A549 (cell line): ENCODE measurements at regions of chr19 and their contacts with region 1.

Region 1: DNA sequence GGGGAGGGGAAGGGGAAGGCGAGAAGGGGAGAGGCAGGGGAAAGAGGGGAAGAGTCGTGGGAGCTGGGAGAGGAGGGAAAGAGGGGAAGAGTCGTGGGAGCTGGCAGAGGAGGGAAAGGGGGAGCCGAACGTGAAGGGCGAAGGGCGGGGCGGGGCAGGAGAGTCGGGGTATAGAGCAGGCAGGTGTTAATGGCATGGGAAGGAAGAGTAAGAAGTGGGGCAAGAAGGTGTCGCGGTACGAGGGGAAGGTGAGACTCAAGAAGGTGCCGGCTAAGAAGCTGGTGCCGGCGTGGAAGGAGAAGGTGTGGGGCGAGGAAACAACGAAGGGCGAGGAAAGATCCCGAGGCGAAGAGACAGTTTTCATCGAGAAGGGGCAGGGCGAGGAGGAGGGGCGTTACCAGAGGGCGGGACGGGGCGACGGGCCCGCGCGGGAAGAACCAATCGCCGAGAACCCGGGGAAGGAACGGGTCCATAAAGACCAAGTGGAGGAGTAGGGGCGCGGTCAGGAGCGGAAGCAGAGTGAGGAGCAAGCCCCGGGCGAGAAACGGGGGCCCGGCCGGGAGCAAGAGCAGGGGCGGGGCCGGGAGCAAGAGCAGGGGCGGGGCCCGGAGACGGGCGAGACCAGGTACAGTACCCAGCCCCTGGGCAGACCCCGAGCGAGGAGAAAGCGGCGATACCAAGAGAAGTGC is 463 bp downstream of the CATSPERG start:
- DNase-seq: peak; percentile 99 to 100
- ATAC-seq: peak; percentile 82 to 92
- H3K4me3 ChIP-seq: peak overlapping the region; percentile 66
- H3K27ac ChIP-seq: peak overlapping the region; percentile 74 to 82
- H3K4me1 ChIP-seq: peaks cover 8% of the 10 kb centered on the region; the same call in 2 of the 3 replicates
- CTCF ChIP-seq: no peak
- EP300 ChIP-seq: no peak
- POLR2A ChIP-seq: no peak
- RAD21 ChIP-seq: no peak

Region 2: GRCh38 chr19:38229585-38230073 is 106.5 kb before region 1 on chr19:
- CTCF ChIA-PET with region 1: interaction called, 1,052 read pairs
- POLR2A ChIA-PET with region 1: interaction called, 4 read pairs
- DNase-seq: peak; percentile 89 to 93
- ATAC-seq: peak; percentile 49 to 79
- H3K4me3 ChIP-seq: peak overlapping the region; percentile 52
- H3K27ac ChIP-seq: peak overlapping the region in 1 of 2 experiments; percentile 67; a peak in 3 of 6 replicates
- H3K4me1 ChIP-seq: peaks cover 25% of the 10 kb centered on the region
- CTCF ChIP-seq: no peak
- EP300 ChIP-seq: no peak
- POLR2A ChIP-seq: no peak
- RAD21 ChIP-seq: no peak

Region 3: GRCh38 chr19:38277969-38278680 is 58.0 kb before region 1 on chr19:
- CTCF ChIA-PET with region 1: interaction called, 24 read pairs
- POLR2A ChIA-PET with region 1: no interaction called
- DNase-seq: no peak
- ATAC-seq: no peak; a peak in 1 of 6 replicates
- H3K4me3 ChIP-seq: no peak overlapping the region
- H3K27ac ChIP-seq: peak overlapping the region in 1 of 2 experiments; percentile 25; a peak in 2 of 6 replicates
- H3K4me1 ChIP-seq: peaks cover 34% of the 10 kb centered on the region
- CTCF ChIP-seq: no peak
- EP300 ChIP-seq: no peak
- POLR2A ChIP-seq: no peak
- RAD21 ChIP-seq: no peak

Region 4: GRCh38 chr19:38304866-38305429 is 31.1 kb before region 1 on chr19:
- CTCF ChIA-PET with region 1: interaction called, 76 read pairs
- POLR2A ChIA-PET with region 1: interaction called, 12 read pairs
- DNase-seq: peak; percentile 100
- ATAC-seq: peak; percentile 60 to 85
- H3K4me3 ChIP-seq: peak overlapping the region; percentile 60
- H3K27ac ChIP-seq: peak overlapping the region; percentile 92 to 95
- H3K4me1 ChIP-seq: peaks cover 50% of the 10 kb centered on the region
- CTCF ChIP-seq: no peak
- EP300 ChIP-seq: no peak; a peak in 1 of 5 replicates
- POLR2A ChIP-seq: peak; percentile 82
- RAD21 ChIP-seq: peak; percentile 1 to 43; a peak in 2 of 5 replicates

Region 5: GRCh38 chr19:38346837-38347236 is 10.7 kb after region 1 on chr19:
- CTCF ChIA-PET with region 1: interaction called, 16 read pairs
- POLR2A ChIA-PET with region 1: no interaction called
- DNase-seq: no peak
- ATAC-seq: no peak
- H3K4me3 ChIP-seq: no peak overlapping the region
- H3K27ac ChIP-seq: no peak overlapping the region
- H3K4me1 ChIP-seq: no peaks in the 10 kb centered on the region
- CTCF ChIP-seq: no peak
- EP300 ChIP-seq: no peak
- POLR2A ChIP-seq: no peak
- RAD21 ChIP-seq: no peak

Region 6: DNA sequence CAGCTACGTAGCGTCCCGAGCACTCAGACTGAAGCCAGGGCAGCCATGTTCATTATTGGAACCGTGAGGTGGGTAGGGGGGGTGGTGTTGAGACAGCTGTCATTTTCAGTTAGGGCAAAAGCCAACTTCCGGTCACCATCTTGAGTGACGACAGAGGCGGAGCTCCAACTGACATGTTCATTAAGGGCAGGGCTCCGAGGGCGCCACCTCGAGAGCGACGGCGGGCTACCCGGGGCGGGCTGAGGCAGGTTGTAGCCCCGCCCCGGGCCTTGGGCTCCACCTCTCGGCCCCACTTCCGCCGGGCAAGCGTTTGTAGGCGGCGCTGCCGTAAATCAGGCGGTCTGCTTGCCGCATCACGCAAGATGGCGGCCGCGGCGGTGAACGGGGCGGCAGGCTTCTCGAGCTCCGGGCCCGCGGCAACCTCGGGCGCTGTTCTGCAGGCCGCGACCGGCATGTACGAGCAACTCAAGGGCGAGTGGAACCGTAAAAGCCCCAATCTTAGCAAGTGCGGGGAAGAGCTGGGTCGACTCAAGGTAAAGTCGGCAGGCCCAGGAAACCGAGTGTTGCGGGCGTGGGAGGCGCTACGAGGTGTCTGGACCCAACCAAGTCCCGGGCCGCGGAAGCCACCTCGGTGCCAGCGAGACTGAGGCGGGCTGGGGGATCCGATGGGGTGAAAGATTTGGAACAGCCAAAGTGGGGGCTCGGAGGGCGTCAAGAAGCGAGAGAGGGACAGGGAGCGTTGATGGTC is 38.5 kb after region 1 on chr19 and contains the start of gene PSMD8:
- CTCF ChIA-PET with region 1: interaction called, 28 read pairs
- POLR2A ChIA-PET with region 1: interaction called, 14 read pairs
- DNase-seq: peak; percentile 100
- ATAC-seq: peak; percentile 91 to 97
- H3K4me3 ChIP-seq: peak within 1 kb of the TSS; percentile 78
- H3K27ac ChIP-seq: peak within 1 kb of the TSS; percentile 88 to 91
- H3K4me1 ChIP-seq: peaks cover 17% of the 10 kb centered on the region
- CTCF ChIP-seq: peak; percentile 40
- EP300 ChIP-seq: no peak
- POLR2A ChIP-seq: peak; percentile 100
- RAD21 ChIP-seq: peak in 1 of 2 experiments; percentile 35; a peak in 3 of 5 replicates
- polyA plus RNA-seq, gene PSMD8: 437 and 469 TPM in 2 replicates